ENCODE measurements at regions of chr13 and their contacts with region 1.

Region 1: DNA sequence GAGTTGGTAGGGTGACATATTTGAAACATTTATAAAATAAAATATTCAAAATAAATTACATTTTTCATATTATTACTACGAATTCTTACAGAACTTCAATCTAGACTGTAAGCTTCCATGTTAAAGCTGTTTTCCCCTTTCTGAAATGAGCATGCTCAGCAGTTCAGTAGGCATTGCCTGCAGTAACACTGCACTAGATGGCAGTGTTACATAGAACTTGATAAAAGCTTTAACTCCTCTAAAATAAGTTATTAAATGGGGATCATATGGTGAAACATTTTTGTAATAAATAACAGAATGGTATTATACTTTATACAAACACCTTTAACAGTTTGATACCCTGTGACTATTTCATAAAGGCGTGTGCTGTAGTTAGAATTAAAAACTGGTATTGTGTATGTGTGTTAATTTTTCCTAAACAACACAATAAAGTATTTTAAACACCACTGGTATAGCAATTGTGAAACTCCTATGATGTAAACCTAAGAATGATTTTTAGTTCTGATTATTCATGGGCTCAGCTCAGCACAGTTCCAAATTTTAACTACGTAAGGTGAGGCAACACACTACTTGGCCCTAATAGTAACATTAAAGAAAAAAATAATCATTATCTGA is 11.6 kb upstream of the GPR18 start:
- DNase-seq: no peak

Region 2: DNA sequence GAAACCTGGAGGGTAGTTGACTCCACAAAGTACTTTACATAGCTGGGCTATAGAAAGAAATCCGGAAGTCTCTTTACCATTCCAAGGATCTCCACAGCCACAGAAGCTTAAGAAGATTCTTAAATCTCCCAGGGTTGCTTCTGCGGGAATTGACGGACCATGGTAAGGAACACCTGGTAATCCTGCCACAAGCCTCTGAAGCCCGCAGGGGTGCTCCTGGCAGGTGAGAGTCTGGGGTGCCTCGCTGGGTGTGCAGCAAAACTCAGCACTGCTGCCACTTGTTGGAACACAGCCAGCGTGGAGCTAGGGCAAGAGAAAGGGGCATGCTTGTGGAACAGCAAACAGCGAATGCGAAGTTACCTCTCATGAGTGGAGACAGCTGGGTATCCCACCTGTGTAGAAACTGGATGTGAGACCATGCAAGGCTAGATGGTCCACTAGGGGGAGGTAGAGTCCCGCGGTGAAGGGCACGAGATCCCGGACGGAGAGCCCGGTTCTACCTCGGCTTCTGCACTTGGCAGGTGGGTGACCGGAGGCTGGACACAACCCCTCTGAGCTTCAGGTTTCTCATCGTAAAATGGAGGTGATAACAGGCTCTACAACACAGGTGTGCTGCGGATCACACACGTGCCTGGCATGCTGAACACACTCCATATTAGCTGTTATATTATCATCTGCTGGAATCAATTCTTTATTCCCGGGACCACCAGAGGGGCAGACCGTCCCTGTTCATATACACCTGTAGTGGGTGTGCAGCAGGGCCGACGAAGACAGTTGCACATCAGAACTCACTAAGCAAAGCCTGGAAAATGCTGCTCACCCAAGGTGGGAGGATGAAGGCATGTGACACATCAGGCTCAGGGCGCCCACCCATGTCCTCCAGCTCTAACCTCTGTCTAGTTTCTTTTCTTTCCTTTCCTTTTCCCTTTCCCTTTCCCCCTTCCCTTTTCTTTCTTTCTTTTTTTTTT is 93.1 kb before region 1 on chr13:
- intact Hi-C with region 1: loop called (anchors 1 kb)
- DNase-seq: peak; percentile 31 to 95 (median 74)